GM12878 (cell line): ENCODE measurements at regions of chr15 and their contacts with region 1.

Region 1: DNA sequence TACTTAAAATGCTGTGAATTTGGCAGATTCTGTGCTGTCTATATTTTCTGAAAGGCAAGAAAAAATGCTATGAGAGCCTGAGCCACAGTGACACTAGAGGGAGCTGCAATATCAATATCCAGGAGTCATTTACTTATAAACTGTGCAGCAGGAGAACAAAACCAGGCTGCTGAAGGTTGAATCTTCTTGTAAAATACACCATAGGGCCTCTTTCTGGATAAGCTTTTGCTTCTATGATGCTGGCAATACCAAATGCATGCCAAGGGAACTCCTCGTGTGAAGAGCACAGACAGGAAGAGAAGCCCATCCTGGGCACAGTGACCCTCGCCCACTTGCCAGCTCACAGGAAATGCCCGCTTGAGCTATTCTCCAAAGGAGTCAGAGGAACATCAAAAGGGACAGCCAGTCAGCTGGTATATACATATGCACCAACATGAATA is 48.0 kb upstream of the TSPAN3 start:
- DNase-seq: peak; percentile 32
- ATAC-seq: peak; percentile 81
- H3K4me3 ChIP-seq: no peak overlapping the region
- H3K27ac ChIP-seq: no peak overlapping the region
- H3K4me1 ChIP-seq: peaks cover 12% of the 10 kb centered on the region; the same call in 1 of the 2 replicates
- H3K27me3 ChIP-seq: no peaks in the 10 kb centered on the region
- CTCF ChIP-seq: peak; percentile 65 to 76 (median 71)
- EP300 ChIP-seq: no peak
- POLR2A ChIP-seq: no peak
- RAD21 ChIP-seq: peak; percentile 86

Region 2: GRCh38 chr15:77107531-77108355 is 11.2 kb before region 1 on chr15:
- CTCF ChIA-PET with region 1: interaction called, 39 read pairs
- POLR2A ChIA-PET with region 1: no interaction called
- RAD21 ChIA-PET with region 1: interaction called, 4 read pairs
- SMC1A ChIA-PET with region 1: interaction called, 10 read pairs
- in situ Hi-C with region 1: no loop called
- intact Hi-C with region 1: no loop called
- DNase-seq: no peak
- ATAC-seq: peak; percentile 82
- H3K4me3 ChIP-seq: no peak overlapping the region
- H3K27ac ChIP-seq: no peak overlapping the region
- H3K4me1 ChIP-seq: no peaks in the 10 kb centered on the region
- H3K27me3 ChIP-seq: no peaks in the 10 kb centered on the region
- CTCF ChIP-seq: peak; percentile 61 to 76 (median 69)
- EP300 ChIP-seq: no peak
- POLR2A ChIP-seq: no peak
- RAD21 ChIP-seq: peak; percentile 78

Region 3: DNA sequence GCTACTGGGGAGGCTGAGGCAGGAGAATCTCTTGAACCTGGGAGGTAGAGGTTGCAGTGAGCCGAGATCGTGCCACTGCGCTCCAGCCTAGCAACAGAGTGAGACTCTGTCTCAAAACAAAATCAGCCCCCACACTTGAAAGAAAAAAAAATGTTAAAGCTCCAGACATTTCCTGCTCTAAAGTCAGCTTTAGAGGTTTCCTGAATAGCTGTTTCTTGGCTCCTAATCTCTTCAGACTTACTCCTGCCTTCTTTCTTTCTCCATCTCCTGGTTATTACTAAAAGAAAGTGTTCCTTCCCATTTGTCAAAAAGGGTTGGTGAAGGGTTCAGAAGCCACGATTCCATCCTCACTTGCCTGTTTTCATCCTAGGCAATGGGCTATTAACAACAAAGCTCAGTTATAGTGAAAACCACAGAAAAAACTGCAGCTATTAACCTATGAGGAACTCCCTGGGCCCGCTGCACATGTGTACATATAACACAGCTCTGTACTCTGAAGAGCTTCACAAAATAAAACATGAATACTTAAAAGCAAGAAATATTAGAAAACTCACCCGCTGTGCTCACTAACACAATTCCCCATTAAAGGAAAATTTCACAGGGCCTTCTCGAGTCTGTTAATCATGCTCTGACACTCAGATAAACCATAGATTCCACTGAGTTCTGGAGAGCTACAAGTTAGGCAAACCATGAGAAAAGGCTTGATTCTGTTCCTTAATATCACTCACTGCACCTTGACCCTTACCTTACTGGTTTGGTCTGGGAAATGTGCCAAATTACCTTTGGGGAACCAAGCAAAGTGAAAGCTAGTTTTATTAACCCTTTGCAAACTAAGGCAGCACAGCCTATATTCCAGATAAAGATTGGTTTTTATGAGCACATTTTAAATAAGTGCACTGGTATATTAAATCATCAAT is 41.9 kb after region 1 on chr15:
- CTCF ChIA-PET with region 1: interaction called, 8 read pairs
- POLR2A ChIA-PET with region 1: no interaction called
- RAD21 ChIA-PET with region 1: interaction called, 9 read pairs
- SMC1A ChIA-PET with region 1: interaction called, 10 read pairs
- in situ Hi-C with region 1: no loop called
- intact Hi-C with region 1: no loop called
- DNase-seq: no peak
- ATAC-seq: peak; percentile 50
- H3K4me3 ChIP-seq: no peak overlapping the region
- H3K27ac ChIP-seq: no peak overlapping the region
- H3K4me1 ChIP-seq: no peaks in the 10 kb centered on the region
- H3K27me3 ChIP-seq: no peaks in the 10 kb centered on the region
- CTCF ChIP-seq: no peak
- EP300 ChIP-seq: no peak
- POLR2A ChIP-seq: no peak
- RAD21 ChIP-seq: no peak

Region 4: DNA sequence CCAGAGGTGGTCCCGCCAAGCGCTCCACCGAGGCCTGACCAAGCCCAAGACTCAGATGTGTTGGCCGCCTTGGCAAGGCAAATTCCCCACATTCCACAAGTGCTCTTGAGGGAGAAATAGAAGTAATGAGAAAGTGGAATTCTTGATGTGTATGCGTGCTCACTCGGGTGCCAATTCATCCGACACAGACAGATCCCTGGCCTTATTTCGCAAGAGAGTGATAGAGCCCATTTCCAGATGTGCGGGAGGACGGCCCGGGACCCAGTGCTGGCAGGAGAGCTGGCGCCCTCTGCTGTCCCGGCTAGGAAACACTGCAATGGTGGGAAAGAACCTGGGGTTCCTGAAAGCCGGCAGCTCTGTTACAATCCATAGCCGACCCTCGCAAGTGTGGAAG is 377.8 kb after region 1 on chr15:
- CTCF ChIA-PET with region 1: interaction called, 141 read pairs
- POLR2A ChIA-PET with region 1: no interaction called
- RAD21 ChIA-PET with region 1: interaction called, 23 read pairs
- SMC1A ChIA-PET with region 1: interaction called, 91 read pairs
- in situ Hi-C with region 1: loop called (anchors 5 kb)
- intact Hi-C with region 1: loop called (anchors 2 kb)
- DNase-seq: no peak
- ATAC-seq: peak; percentile 92
- H3K4me3 ChIP-seq: no peak overlapping the region
- H3K27ac ChIP-seq: no peak overlapping the region
- H3K4me1 ChIP-seq: peaks cover 20% of the 10 kb centered on the region
- H3K27me3 ChIP-seq: no peaks in the 10 kb centered on the region
- CTCF ChIP-seq: peak; percentile 89 to 96 (median 96)
- EP300 ChIP-seq: no peak
- POLR2A ChIP-seq: no peak
- RAD21 ChIP-seq: peak; percentile 95